Head of caudate nucleus (tissue), 42 donors: ENCODE measurements at regions of chr11 and their contacts with region 1.

Region 1: DNA sequence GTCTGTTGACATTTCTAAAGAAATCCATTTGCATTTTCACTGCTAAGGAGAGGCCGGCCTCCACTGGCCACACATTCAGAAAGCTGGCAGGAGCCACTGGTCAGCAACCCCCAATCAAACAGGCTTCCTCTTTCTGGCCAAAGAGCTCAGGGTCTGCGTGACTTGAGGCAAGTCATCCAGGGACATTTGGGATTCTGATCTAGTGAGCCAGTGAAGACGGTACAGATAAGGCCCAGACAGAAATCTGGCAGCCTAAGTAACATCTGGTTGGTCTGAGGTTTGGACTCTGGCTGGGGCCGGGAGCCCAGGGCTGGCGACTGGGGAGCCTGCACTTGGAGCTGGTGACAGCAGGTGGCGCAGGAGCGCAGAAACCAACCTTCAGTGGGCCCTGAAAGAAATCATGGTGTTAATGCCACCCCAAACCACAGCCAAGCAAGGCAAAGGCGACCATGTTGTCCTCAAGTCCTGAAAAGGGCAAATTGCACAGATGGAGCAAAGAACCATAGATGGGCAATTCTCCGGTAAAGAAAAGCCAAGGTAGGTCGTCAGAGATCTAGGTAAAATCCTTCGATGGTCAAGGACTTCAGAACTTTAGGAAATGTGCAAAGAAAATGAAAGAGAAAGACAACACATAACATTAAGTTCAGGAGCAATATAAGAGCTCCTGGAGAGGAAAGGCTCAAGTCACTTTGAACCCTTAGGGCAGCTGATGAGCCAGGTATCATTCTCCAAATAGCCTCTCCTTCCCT is 99.4 kb upstream of the BLID start:
- DNase-seq: peak in 41 of 42 donors; percentile 66 to 94 (median 83)

Region 2: DNA sequence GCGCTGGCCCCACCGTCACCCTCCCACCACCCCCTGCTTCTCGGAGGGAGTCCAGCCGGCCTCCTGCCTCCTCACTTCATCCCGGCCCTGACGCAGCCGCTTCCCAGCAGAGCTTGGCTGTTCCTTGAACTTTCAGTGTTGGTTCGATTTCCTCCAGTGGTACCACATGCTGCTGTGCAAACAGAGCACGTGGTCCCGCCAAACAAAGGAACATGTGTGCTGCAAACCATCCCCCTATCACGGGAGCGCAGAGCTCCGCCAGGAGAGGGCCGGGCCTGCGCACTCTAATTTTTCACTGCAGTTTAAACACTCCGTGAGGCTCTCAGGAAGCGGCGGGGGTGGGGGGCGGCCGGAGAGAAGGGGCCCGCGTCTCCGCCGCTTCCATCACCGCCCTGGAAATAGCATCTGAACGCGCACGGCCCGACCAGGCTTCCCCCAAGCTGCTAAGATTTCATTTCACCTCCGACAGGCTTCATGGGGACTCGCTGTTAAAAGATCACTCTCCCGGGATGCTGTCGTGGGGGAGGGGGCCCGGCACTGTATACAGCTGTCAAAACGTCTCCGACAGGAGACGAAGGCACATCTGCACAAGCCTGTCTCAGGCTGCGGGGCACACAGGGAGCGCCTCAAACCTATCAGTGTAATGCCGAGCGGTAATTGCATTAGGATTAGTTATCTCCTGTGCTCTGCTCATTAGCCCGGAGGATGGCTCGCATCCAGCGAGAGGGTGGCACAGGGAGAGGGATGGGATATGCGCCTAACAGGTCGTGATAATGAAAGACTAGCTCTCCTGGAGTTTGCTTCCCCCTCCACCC is 492.8 kb before region 1 on chr11:
- intact Hi-C with region 1: loop called (anchors 10 kb)
- DNase-seq: peak; percentile 88 to 98 (median 94)

Region 3: DNA sequence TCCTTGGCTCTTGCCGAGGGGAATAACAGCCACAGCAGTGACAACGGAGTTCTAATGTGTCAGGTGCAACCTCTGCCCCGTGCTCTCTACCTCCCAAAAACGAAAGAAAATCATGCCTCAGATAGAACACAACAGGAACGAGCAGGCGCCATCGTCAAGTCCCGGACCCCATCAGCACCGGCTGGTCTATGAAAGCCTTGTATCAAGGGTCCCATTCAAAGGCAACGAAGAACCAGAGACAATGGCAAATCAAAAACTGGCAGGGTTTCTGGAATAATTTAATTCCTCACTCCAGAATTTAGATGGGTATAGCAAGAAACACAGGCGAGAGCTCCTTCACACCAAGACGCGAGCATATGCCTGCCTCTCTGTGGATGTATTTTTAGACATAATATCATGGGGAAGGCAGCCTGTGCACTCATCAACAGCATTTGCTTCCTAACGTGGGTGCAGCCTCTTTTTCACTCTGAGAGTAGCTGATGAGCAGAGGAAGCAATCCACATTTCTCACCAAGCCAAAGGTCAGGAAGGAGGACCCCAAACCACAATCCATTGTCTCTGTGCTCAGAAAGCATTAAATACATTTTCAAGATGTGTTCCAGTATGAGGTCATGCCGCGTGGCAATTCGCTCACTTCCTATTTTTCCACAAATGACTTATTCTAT is 94.0 kb after region 1 on chr11:
- intact Hi-C with region 1: loop called (anchors 5 kb)
- DNase-seq: peak; percentile 24 to 84 (median 57)

Region 4: DNA sequence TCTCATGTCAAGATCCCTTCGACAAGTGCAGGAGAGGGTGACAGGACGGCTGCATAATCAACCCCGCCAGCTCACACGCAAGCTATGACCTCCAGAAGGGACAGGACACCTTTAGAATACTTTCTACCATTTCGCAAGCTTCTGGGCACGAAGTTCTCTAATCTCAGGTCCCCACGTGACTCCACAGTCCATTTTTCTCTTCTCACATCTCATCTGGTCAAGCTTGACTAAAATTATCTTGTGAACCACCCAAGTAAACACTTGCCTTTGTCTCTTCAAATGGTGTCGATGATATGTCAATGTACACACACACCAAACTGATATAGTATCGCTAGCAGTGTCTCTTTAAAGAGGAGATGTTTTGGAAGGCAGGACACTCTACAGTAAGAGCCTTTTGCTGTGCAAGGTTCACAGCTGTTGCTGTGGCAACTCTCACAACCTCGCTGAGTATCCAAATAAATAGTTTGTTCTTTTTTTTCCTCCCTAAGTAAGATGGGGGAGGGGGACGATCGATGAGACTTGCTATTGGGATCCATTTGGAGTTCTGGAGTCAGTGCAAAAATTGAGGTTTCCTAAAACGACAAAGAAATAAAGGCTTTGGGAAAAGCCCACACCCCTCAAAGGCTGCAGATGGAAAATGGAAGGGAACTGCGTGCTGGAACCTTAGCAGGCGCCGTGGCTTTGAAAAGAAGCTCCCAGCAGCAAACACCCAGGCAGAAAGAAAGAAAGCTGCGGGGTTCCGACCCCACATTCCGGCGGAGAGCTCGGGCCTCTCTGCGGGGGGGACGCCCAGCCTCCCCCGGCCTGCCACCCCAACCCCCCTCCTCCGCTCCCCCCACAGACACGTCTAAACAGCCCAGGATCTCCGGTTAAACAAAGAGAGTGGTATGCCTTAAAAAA is 224.7 kb after region 1 on chr11:
- intact Hi-C with region 1: loop called (anchors 5 kb)
- DNase-seq: peak in 36 of 42 donors; percentile 8 to 74 (median 44)

Region 5: GRCh38 chr11:122505304-122506006 is 290.0 kb after region 1 on chr11:
- intact Hi-C with region 1: loop called (anchors 10 kb)
- DNase-seq: peak; percentile 70 to 96 (median 89)